Transverse colon (tissue), 4 donors: ENCODE measurements at regions of chr7 and their contacts with region 1.

Region 1: DNA sequence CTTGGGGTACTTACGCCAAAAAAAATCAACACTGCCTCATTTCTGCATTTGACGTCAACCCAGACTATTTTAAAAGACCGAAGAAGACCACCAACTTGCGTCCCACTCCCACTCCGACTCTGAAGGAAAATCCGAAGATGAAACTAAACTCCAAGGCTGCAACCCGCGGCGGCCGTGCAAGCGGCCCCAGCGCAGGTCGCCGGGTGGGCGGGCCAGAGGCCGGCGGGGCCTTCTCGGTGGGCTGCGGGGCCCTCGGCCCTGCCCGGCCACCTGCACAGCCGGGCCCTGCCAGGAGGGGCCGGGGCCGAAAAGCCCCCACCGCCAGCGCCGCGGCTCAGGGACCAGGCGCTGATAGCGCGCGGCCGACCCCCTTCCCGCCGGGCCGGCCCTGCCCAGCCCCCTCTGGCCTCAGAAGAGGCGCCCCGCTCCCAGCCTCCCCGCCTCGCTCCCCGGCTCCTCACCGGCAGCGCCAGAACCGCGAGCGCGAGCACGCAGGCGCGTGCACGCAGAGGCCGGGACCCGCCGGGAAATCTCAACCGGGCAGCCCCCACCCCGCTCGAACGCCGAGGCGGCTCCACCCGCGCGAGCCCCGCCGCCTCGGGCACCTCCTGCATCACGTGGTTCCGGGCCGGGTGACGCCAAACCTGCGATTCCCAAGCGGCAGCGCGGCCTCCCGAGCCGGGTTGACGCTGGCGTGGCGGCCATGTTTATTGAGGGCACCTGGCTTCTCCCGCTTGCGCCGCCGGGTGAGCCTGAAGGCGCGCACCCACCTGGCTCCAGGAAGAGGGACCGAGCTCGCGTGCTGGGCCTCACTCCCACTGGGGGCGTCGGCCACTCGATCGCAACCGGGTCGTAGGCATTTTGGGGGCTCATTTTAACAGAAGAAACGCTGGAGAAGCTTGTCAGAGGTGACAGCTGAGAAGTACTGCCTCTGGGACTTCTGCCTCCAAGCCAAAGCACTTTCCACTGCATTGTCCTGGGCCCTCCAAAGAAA is at the start of gene C7orf25:
- DNase-seq: peak; percentile 97
- H3K4me3 ChIP-seq: peak within 1 kb of the TSS; percentile 72 to 98 (median 94)
- H3K27ac ChIP-seq: peak within 1 kb of the TSS; percentile 80 to 91 (median 88)
- H3K4me1 ChIP-seq: peaks cover 8 to 31% (median 11%) of the 10 kb centered on the region in 4 donors
- H3K27me3 ChIP-seq: no peaks in the 10 kb centered on the region
- CTCF ChIP-seq: no peak
- EP300 ChIP-seq: no peak
- POLR2A ChIP-seq: peak; percentile 52
- total RNA-seq, gene C7orf25: 7.0 to 11.6 (median 9.7) TPM

Region 2: DNA sequence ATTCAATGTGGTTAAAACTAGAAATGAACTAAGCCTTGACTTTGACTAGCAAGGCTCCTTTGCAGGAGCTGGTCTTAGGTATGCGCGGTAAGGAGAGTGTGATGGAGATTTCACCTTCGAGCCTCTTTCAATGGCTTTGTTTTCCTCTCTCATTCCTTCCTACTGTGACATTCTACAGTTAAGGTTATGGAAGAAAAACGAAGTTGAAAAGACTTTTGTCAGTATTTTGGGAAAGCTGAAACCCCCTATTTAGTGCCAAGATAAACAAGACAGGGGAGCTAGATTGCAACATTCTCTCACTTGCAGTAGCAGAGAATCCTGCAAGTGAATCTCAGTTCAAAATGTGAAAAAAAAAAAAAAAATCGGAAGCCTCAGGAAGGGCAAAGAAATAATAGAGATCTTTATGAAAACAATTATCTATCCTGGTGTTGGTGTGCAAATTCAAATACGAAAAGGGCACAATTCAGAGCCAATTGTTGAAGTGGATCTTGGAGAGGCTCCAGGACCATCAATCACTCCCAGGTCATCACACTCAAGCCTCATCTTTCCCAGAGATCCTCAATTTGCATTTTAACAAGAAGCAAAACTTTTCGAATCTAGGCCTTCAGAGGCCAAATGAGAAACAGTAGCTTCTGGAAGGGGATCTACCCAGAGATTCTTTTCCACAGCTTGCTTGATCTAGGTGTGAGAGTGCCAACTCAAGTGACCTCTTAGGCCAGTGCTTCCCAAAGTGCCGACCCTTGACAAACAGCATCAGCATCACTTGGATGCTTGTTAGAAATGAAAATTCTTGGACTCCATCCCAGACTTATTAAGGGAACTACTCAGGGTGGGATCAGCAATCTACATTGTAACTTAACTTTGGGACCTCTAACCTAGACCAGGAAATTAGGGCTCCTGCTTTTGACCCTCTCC is 1372.7 kb before region 1 on chr7:
- in situ Hi-C with region 1: no loop called
- intact Hi-C with region 1: loop called (anchors 5 kb)
- DNase-seq: no peak
- H3K4me3 ChIP-seq: no peak overlapping the region
- H3K27ac ChIP-seq: no peak overlapping the region
- H3K4me1 ChIP-seq: no peaks in the 10 kb centered on the region
- H3K27me3 ChIP-seq: no peaks in the 10 kb centered on the region
- CTCF ChIP-seq: no peak
- EP300 ChIP-seq: no peak
- POLR2A ChIP-seq: no peak

Region 3: DNA sequence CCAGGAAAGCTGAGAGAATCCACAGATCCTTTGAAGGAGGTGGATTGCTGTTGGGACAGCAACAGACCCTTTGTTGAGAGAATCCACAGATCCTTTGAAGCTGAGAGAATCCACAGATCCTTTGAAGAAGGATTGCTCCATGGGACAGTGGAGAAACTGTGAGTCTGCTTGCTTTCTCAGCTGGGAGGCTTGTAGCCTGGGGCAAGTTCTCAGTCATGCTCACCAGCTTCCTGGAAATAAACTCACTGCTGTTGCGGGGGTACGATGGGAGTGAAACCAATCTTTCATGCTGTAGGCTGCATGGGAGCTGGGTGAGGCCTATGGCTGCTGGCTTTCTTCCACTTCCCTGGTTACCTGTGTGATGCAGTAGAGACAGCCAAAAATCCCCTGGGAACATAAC is 106.1 kb before region 1 on chr7:
- in situ Hi-C with region 1: no loop called
- intact Hi-C with region 1: no loop called
- DNase-seq: no peak
- H3K4me3 ChIP-seq: no peak overlapping the region
- H3K27ac ChIP-seq: no peak overlapping the region
- H3K4me1 ChIP-seq: no peaks in the 10 kb centered on the region
- H3K27me3 ChIP-seq: no peaks in the 10 kb centered on the region
- CTCF ChIP-seq: no peak
- EP300 ChIP-seq: no peak
- POLR2A ChIP-seq: no peak

Region 4: DNA sequence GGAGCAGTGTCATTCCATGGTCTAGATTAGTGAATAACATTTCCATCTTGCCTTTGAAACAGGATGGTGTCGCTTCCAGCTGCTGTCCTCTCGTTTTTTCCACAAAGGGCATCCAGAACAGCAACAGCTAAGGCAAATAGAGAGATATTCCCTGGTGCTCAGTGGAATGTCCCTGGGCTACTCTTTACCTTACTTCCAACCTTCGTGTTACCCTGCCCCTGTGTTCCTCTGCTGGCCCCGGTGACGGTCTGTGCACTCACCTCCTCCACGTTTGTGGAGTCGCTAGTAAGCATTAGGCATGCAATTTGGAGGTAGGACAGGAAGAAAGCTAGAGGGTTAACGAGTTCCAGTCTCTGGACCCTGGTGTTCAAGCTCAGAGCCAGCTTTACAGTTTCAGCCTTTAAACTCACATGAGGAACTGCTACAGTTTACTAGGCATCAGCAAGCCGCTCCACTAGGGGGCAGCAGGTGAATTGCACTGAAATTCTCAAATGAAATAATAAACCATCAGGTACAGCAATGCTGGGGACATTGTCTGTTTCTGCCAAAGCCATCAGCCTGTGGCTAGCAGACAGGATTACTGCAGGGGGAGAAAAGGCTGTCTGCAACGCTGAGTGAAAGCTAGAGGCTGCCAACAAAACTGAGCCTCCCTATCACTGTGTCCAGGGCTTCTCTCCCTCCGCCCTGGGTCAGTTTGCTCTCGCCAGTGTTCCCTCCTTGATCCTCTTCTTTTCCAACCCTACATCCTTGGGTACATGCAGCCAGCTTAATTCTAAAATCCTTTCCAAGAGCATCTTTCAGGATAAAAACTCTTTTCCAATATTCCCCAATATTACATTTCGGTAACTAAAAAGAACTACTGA is 29.5 kb after region 1 on chr7:
- in situ Hi-C with region 1: no loop called
- intact Hi-C with region 1: no loop called
- DNase-seq: peak; percentile 73
- H3K4me3 ChIP-seq: no peak overlapping the region
- H3K27ac ChIP-seq: no peak overlapping the region
- H3K4me1 ChIP-seq: no peaks in the 10 kb centered on the region
- H3K27me3 ChIP-seq: no peaks in the 10 kb centered on the region
- CTCF ChIP-seq: peak; percentile 62 to 86 (median 85)
- EP300 ChIP-seq: no peak
- POLR2A ChIP-seq: no peak